Testis (tissue), 5 donors: ENCODE measurements at regions of chr11 and their contacts with region 1.

Region 1: DNA sequence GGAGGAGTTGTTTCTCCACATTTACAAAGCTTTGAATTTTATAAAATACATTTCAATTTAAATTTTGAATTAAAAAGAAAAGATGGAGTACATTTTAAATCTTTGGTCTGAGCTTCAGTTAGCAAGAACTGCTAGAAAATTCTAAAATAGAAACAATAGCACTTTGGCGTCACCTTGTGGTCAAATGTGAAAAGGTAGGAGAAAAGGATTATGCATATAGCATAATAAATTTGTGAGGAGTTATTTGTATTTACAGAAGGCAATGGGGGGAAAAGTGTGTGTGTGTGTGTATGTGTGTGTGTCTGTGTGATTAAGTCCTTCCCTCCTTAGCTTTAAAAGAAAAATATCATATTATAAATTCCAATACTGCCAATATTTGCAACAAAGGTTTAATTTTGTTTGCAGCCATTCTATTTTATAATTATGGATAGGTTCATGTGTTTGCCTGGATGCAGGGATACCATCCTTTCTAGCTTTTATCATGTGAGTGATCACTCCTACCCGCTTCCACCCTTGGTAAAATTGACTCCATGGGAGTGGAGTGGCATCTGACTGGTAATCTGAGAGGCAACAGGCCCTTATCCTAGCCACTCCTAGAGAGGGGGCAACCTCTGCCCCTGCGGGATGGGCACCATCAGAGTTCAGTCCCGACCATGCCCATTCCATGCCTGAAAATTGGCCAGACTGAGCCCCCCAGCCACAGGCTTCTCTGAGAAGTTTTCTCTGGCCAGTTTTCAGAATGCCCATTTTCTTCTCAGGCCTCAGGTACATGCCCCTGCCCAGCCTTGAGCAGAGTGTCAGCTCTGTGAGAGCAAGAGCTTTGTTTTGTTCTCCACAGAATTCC is 13.6 kb upstream of the LGR4 start:
- DNase-seq: peak; percentile 47
- H3K4me3 ChIP-seq: no peak overlapping the region
- H3K27ac ChIP-seq: no peak overlapping the region
- H3K4me1 ChIP-seq: no peaks in the 10 kb centered on the region
- H3K27me3 ChIP-seq: no peaks in the 10 kb centered on the region
- CTCF ChIP-seq: peak; percentile 87 to 94 (median 90)
- POLR2A ChIP-seq: no peak

Region 2: GRCh38 chr11:27183672-27184457 is 302.3 kb before region 1 on chr11:
- intact Hi-C with region 1: loop called (anchors 5 kb)
- DNase-seq: peak; percentile 84
- H3K4me3 ChIP-seq: no peak overlapping the region
- H3K27ac ChIP-seq: no peak overlapping the region
- H3K4me1 ChIP-seq: peaks cover 14% of the 10 kb centered on the region
- H3K27me3 ChIP-seq: no peaks in the 10 kb centered on the region
- CTCF ChIP-seq: peak; percentile 67 to 81 (median 73)
- POLR2A ChIP-seq: no peak

Region 3: GRCh38 chr11:27571156-27571825 is 85.1 kb after region 1 on chr11:
- intact Hi-C with region 1: no loop called
- DNase-seq: no peak
- H3K4me3 ChIP-seq: no peak overlapping the region
- H3K27ac ChIP-seq: no peak overlapping the region
- H3K4me1 ChIP-seq: no peaks in the 10 kb centered on the region
- H3K27me3 ChIP-seq: no peaks in the 10 kb centered on the region
- CTCF ChIP-seq: no peak
- POLR2A ChIP-seq: no peak